ENCODE measurements at regions of chr9 and their contacts with region 1.

Region 1: GRCh38 chr9:126471084-126471624 is 142.6 kb upstream of the LMX1B start:
- DNase-seq: peak; percentile 94
- ATAC-seq: peak; percentile 80
- H3K4me3 Mint-ChIP-seq: peak overlapping the region; percentile 46
- H3K27ac Mint-ChIP-seq: peak overlapping the region; percentile 79
- H3K4me1 Mint-ChIP-seq: peaks cover 64% of the 10 kb centered on the region
- H3K27me3 Mint-ChIP-seq: peaks cover 3% of the 10 kb centered on the region
- CTCF ChIP-seq: no peak

Region 2: GRCh38 chr9:126411225-126411947 is 59.8 kb before region 1 on chr9:
- CTCF ChIA-PET with region 1: interaction called, 3 read pairs
- POLR2A ChIA-PET with region 1: interaction called, 3 read pairs
- intact Hi-C with region 1: loop called (anchors 2 kb)
- DNase-seq: peak; percentile 70
- ATAC-seq: peak; percentile 90
- H3K4me3 Mint-ChIP-seq: peak overlapping the region; percentile 61
- H3K27ac Mint-ChIP-seq: peak overlapping the region; percentile 86
- H3K4me1 Mint-ChIP-seq: peaks cover 41% of the 10 kb centered on the region
- H3K27me3 Mint-ChIP-seq: no peaks in the 10 kb centered on the region
- CTCF ChIP-seq: no peak